PC-9 (cell line): ENCODE measurements at regions of chr18 and their contacts with region 1.

Region 1: GRCh38 chr18:47100214-47100831 is 50.0 kb downstream of the HDHD2 start:
- DNase-seq: peak in 1 of 2 experiments; percentile 39
- H3K4me3 ChIP-seq: no peak overlapping the region
- H3K27ac ChIP-seq: no peak overlapping the region
- H3K4me1 ChIP-seq: no peaks in the 10 kb centered on the region
- H3K27me3 ChIP-seq: no peaks in the 10 kb centered on the region
- CTCF ChIP-seq: peak; percentile 81

Region 2: GRCh38 chr18:47191961-47192360 is 91.6 kb after region 1 on chr18:
- CTCF ChIA-PET with region 1: no interaction called
- POLR2A ChIA-PET with region 1: no interaction called
- intact Hi-C with region 1: no loop called
- DNase-seq: peak in 1 of 2 experiments; percentile 53
- H3K4me3 ChIP-seq: no peak overlapping the region
- H3K27ac ChIP-seq: no peak overlapping the region
- H3K4me1 ChIP-seq: no peaks in the 10 kb centered on the region; the same call in 1 of the 2 replicates
- H3K27me3 ChIP-seq: no peaks in the 10 kb centered on the region
- CTCF ChIP-seq: no peak

Region 3: GRCh38 chr18:47204908-47205522 is 104.7 kb after region 1 on chr18:
- CTCF ChIA-PET with region 1: no interaction called
- POLR2A ChIA-PET with region 1: no interaction called
- intact Hi-C with region 1: loop called (anchors 1 kb)
- DNase-seq: peak in 1 of 2 experiments; percentile 14
- H3K4me3 ChIP-seq: no peak overlapping the region
- H3K27ac ChIP-seq: no peak overlapping the region
- H3K4me1 ChIP-seq: no peaks in the 10 kb centered on the region
- H3K27me3 ChIP-seq: peaks cover 28% of the 10 kb centered on the region
- CTCF ChIP-seq: peak; percentile 79

Region 4: DNA sequence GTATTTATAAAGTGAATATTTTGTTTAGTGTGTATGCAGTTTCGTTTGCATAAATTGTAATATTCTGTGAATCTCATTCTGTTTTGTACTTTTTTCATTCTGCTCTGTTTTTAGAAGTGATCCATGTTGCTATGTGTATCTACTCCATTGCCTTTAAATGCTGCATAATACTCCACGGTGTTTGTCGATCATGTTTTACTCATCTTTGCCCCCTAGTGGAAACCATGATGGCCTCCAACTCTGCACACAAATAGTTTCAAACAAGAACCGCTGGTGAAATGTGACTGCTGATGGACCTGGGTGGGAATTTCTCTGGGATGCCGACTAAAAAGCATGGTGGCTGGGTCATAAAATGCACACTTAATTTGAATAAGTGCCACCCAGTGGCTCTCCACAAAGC is 183.2 kb after region 1 on chr18:
- CTCF ChIA-PET with region 1: no interaction called
- POLR2A ChIA-PET with region 1: no interaction called
- intact Hi-C with region 1: loop called (anchors 5 kb)
- DNase-seq: no peak
- H3K4me3 ChIP-seq: no peak overlapping the region
- H3K27ac ChIP-seq: no peak overlapping the region
- H3K4me1 ChIP-seq: no peaks in the 10 kb centered on the region
- H3K27me3 ChIP-seq: peaks cover 36% of the 10 kb centered on the region; the same call in 1 of the 2 replicates
- CTCF ChIP-seq: peak; percentile 73

Region 5: DNA sequence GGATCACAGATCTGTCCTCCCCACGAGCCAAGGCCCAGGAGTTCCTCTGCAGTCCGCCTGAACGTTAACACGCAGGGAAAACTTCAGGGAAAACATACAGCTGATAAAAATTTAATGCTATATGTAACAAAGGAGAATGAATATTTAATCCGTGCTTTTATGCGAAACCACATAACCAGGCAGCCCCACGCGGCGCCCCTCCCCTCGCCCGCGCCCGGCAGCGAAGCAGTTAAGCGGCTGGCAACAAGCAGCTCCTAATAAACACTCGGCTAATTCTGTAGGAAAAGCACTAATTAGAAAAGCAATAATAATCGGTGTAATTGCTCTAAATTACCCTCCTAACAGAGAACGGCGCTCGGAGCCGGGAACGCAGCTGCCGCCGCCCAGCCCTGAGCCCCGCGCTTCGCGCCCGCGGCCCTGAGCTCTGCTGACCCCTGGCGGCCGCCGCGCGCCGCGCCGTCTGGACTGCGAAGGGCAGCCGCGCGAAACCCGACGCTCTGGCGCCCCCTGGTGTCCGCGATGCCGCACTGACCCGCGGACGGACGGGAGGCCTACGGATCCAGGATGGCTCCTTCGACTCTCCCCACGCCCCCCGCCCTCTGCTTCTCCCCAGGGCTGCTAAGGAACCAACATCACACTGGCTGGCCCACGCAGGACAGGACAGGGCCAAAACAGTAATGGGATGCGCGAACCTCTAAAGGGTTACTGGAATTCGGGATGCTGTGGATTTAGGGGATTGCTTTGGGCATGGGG is 648.7 kb after region 1 on chr18:
- CTCF ChIA-PET with region 1: no interaction called
- POLR2A ChIA-PET with region 1: no interaction called
- intact Hi-C with region 1: loop called (anchors 2 kb)
- DNase-seq: peak in 1 of 2 experiments; percentile 65
- H3K4me3 ChIP-seq: no peak overlapping the region
- H3K27ac ChIP-seq: no peak overlapping the region
- H3K4me1 ChIP-seq: no peaks in the 10 kb centered on the region
- H3K27me3 ChIP-seq: peaks cover 42% of the 10 kb centered on the region
- CTCF ChIP-seq: peak; percentile 84

Region 6: GRCh38 chr18:48879008-48879431 is 1778.7 kb after region 1 on chr18:
- CTCF ChIA-PET with region 1: no interaction called
- POLR2A ChIA-PET with region 1: interaction called, 18 read pairs
- intact Hi-C with region 1: no loop called
- DNase-seq: peak; percentile 77 to 86
- H3K4me3 ChIP-seq: peak overlapping the region; percentile 51
- H3K27ac ChIP-seq: peak overlapping the region; percentile 94
- H3K4me1 ChIP-seq: peaks cover 42% of the 10 kb centered on the region
- H3K27me3 ChIP-seq: no peaks in the 10 kb centered on the region
- CTCF ChIP-seq: no peak